Thyroid gland (tissue), 4 donors: ENCODE measurements at regions of chr3 and their contacts with region 1.

Region 1: DNA sequence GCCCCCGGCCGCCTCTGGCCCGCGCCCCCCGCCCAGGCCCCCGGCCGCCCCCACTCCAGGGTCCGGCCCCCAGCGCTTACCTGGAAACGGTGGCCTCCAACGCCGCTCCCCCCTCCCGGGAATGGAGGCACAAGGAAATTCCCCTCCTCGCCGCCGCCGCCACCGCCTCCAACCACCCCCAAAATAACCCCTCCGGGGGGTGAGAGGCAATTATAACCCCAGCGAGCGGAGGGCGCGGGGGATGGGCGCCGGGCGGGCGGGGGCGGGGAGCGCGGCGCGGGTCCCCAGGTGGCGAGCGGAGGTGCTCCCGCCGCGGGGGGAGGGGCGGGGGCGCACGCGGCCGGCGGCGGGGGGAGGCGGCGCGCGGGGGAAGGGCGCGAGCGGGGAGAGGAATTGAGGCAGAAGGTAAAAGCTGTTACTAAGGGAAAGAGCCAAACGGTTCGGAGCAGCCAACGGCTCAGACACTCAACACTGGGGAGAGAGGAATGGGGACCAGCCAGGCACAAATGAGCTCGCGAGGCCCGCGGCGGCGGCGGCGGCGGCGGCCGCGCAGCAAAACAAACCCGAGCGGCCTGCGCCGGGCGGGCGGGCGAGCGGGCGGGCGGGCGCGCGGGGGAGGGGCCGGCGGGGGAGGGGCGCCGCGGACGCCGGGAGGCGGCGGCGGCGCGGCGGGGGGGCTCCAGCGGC is at the start of gene TBL1XR1:
- DNase-seq: peak; percentile 93 to 94
- H3K4me3 ChIP-seq: peak within 1 kb of the TSS; percentile 69 to 96 (median 70)
- H3K27ac ChIP-seq: peak within 1 kb of the TSS; percentile 98 to 99 (median 98)
- H3K4me1 ChIP-seq: peaks cover 26 to 28% of the 10 kb centered on the region in 2 donors
- H3K27me3 ChIP-seq: no peaks in the 10 kb centered on the region
- CTCF ChIP-seq: no peak
- POLR2A ChIP-seq: peak in 1 of 2 donors; percentile 21
- total RNA-seq, gene TBL1XR1: 164 to 239 (median 195) TPM

Region 2: DNA sequence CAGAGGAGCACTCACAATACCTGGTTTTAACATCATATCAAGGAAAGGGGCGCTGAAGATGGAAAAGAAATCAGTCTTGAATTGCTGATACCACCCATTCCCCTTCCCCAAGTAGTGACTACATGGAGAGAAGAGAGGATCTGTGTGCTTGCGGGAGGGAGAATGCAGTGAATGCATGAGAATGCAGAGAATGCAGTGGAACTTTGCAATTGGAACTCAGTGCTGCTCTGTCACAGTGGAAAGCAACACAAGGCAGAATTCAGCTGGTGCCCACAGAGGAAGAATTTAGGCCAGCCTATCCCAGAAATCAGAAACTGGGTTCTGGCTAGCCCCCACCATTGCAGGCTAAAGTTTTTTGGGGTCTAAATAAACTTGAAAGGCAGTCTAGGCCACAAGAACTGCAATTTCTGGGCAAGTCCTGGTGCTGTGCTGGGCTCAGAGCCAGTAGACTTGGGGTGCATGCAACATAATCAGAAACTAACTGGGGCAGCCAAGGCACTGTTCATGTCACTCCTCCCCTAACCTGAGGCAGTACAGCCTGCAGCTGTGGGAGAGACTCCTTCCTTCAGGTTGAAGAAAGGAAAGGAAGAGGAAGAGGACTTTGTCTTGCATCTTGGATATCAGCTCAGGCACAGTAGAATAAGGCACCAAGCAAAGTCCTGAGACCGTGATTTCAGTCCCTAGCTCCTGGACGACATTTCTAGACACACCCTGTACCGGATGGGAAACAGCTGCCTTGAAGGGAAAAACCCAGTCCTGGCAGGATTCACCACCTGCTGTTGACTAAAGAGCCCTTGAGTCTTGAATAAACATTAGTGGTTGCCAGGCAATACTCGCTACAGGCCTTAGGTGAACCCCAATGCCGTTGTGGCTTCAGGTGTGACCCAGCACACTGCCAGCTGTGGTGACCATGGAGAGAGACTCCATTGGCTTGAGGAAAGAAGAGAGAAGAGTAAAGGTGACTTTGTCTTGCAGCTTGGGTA is 329.2 kb before region 1 on chr3:
- intact Hi-C with region 1: no loop called
- DNase-seq: peak; percentile 77 to 81
- H3K4me3 ChIP-seq: no peak overlapping the region
- H3K27ac ChIP-seq: peak overlapping the region; percentile 6 to 20 (median 19)
- H3K4me1 ChIP-seq: peaks cover 0 to 17% of the 10 kb centered on the region in 2 donors
- H3K27me3 ChIP-seq: no peaks in the 10 kb centered on the region
- CTCF ChIP-seq: no peak
- POLR2A ChIP-seq: no peak

Region 3: DNA sequence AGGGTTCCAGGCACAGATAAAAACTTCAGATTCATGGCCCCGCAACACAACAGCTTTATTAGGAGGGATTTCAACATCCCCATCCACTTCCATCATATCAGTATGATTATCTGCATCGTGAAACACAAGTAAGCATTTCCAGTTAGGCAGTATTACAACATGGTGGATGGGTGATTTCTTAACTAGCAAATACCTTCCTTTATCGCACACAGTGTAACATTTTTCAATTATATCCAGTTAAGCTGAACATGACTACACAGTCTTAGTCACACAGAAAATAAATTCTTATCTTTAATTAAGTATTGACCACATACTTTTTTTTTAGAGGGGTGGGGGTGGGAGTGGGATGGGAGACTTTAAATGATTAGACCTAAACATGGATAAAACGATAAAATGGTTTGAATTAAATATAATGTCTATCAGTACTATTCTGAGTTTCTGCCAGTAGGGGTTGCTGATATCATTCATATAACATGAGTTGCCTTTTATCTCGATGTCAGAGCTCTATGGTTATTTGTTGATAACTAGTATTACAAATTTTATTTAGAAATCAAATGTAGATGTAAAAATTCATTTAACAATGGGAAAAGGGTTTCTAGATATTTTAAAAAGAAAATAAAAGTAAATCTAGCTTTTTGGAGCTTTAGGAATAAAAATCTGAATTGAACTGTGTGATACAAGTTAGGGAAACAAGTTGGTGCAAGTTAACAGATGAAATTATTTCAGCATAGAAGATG is 146.5 kb before region 1 on chr3:
- intact Hi-C with region 1: loop called (anchors 10 kb)
- DNase-seq: no peak
- H3K4me3 ChIP-seq: no peak overlapping the region
- H3K27ac ChIP-seq: peak overlapping the region in 2 of 3 donors; percentile 13 to 28
- H3K4me1 ChIP-seq: peaks cover 6 to 9% of the 10 kb centered on the region in 2 donors
- H3K27me3 ChIP-seq: no peaks in the 10 kb centered on the region
- CTCF ChIP-seq: peak; percentile 24 to 83 (median 52)
- POLR2A ChIP-seq: no peak

Region 4: DNA sequence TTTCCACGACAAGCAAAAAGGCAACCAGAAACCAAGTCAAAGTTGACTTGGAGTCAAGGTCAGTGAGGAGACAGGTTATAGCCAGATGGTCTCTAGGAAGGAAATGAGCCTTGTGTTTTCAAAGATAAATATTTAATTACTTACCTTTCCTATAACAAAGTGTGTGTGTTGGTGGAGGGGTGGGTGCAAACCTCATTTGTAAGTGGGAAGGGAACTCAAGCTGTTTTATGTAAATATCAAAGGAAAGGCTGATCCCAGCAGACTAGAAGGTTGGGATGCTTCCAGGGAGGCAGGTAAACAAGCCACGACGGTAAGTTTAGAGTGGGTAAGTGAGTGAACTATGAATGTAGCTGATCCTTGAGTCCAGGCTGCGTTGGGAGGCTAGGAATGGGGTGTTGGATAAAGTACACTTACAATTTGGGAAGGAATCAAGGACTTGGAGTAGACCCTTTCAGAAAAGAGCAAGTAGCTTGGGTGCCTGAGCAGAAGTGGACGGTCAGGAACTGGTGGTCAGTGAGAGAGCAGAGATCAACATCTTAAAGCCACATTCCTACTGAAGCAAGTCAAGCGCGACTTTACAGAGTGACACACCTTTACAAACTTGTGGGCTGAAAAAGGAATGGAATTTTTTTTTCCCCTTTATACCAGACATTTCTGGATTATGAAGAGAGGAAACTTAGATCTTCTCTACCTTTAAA is 82.1 kb after region 1 on chr3:
- intact Hi-C with region 1: loop called (anchors 10 kb)
- DNase-seq: peak; percentile 56 to 59
- H3K4me3 ChIP-seq: no peak overlapping the region
- H3K27ac ChIP-seq: peak overlapping the region; percentile 66 to 95 (median 81)
- H3K4me1 ChIP-seq: peaks cover 20% of the 10 kb centered on the region in 2 donors
- H3K27me3 ChIP-seq: no peaks in the 10 kb centered on the region
- CTCF ChIP-seq: no peak
- POLR2A ChIP-seq: peak in 1 of 2 donors; percentile 32

Region 5: DNA sequence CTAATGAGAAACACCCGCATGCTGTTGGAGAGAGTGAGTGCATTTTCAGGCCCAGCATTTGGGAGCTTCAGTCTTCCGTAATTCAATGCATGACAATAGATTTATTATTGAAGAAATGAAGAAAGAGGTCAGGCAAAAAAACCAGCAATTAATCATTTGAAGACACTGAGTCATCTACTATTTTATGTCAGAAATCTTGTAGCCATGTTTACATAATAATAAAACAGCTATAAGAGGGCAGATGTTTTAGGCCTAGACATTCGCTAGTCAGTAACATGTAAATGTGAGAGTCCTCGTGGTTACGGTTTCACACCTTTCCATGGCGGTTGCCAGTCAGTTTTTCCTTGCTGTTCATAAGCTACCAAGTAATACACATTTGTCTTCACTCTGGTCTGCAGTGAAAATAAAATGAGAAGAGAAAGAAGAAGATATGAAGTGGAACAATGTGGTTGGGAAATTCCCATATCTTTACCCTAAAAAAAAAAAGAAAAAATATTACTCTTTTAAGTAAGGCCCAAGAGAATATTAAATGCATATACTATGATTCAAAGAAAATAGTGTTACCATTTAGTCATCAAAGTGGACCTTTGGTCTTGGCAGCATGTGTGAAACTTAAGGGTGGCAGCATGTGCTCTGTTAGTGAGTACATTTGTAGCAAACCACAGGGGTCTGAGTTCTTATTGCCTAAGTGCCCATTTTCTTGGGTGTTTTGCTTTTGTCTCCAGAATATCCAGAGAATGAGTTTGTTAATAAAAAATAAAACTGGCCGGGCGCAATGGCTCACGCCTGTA is 140.6 kb after region 1 on chr3:
- intact Hi-C with region 1: no loop called
- DNase-seq: no peak
- H3K4me3 ChIP-seq: no peak overlapping the region
- H3K27ac ChIP-seq: peak overlapping the region in 1 of 3 donors; percentile 71
- H3K4me1 ChIP-seq: peaks cover 22 to 40% of the 10 kb centered on the region in 2 donors
- H3K27me3 ChIP-seq: no peaks in the 10 kb centered on the region
- CTCF ChIP-seq: no peak
- POLR2A ChIP-seq: no peak

Region 6: DNA sequence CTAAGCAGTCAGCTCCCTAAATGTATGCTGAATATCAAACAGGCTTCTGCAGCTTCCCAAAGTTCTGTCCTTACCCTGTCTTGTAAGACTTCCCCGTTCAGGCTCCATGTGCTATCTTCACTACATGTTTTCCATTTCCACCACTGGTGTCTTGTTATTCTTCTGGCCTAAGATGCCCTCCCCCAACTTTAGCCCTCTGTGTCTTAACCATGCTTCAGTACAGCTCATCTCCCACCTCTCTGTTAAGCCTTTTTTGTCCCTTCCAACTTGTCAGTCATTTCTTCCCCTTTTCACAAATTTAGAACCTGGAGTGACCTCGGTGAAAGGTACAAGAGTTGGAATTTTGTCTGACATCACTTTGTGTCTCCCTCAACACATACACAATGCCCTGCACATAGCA is 151.8 kb after region 1 on chr3:
- intact Hi-C with region 1: no loop called
- DNase-seq: no peak
- H3K4me3 ChIP-seq: no peak overlapping the region
- H3K27ac ChIP-seq: peak overlapping the region in 2 of 3 donors; percentile 55 to 90
- H3K4me1 ChIP-seq: peaks cover 53 to 61% of the 10 kb centered on the region in 2 donors
- H3K27me3 ChIP-seq: no peaks in the 10 kb centered on the region
- CTCF ChIP-seq: no peak
- POLR2A ChIP-seq: no peak

Region 7: DNA sequence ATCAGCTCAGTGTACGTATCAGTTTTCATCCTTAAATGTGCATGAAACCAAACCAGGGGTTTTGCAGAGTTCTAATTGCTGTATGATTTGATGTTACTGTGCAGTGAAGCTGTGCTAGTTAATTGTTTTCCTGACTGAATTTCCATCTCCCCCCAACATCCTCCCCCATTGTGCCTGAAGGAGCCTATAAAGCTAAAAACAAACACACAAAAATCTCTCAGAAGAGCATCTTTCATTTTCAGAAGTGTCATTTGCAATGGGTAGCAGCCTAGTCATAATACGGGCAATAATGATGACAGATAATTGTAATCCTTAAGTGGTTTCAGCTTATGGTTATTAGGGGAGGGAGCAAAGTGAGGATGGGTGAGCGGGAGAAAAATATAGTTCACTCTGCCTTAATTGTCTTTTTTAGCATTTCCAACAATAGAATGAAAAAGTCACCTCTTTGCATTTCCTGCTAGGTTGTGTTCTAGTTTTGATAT is 208.0 kb after region 1 on chr3:
- intact Hi-C with region 1: no loop called
- DNase-seq: no peak
- H3K4me3 ChIP-seq: no peak overlapping the region
- H3K27ac ChIP-seq: no peak overlapping the region
- H3K4me1 ChIP-seq: no peaks in the 10 kb centered on the region
- H3K27me3 ChIP-seq: no peaks in the 10 kb centered on the region
- CTCF ChIP-seq: no peak
- POLR2A ChIP-seq: no peak